Mammary epithelial cell (primary cell): ENCODE measurements at regions of chr6 and their contacts with region 1.

Region 1: GRCh38 chr6:113626475-113626874 is 230.7 kb upstream of the MARCKS start:
- DNase-seq: no peak
- H3K4me3 ChIP-seq: no peak overlapping the region
- H3K27ac ChIP-seq: no peak overlapping the region
- H3K4me1 ChIP-seq: peaks cover 10% of the 10 kb centered on the region
- H3K27me3 ChIP-seq: no peaks in the 10 kb centered on the region
- CTCF ChIP-seq: no peak

Region 2: DNA sequence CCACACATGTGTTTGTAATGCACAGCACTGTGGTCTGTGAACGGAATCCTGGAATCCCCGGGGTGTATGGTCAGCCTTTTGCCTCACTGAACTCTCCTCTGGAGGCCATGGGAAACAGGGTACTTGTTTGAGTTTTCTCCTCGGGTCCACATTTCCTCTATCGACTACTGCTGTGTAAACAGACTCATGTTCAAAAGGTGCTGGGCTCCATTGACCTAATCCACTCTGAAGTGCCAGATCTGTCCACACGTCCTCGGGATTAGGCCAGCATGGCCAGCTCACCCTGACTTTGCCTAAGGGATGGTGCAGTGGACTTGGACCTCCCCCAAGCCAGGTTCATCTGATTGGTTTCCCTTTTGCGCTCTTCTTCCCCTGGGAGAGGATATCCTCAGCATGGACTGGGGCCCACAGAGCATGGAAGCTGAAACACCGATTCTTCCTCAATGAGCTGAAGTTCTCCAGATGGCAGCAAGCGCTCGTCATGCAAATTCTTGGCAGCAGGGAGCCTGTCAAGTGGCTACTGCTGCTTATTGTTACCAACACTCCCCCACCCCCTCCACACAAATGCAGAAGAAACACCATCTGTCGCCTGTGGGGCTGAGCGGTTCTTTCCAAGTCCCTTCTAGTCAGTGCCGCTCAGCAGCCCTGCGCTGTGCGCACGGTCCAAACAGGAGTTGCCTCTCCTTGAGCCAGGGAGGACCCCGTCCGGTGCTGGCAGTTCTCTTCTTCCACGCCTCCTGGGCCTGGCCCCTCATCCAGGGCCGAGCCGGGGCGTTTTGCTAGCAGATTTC is 61.9 kb before region 1 on chr6:
- CTCF ChIA-PET with region 1: no interaction called
- dilution Hi-C with region 1: no loop called
- in situ Hi-C with region 1: no loop called
- intact Hi-C with region 1: loop called (anchors 2 kb)
- DNase-seq: no peak
- H3K4me3 ChIP-seq: no peak overlapping the region
- H3K27ac ChIP-seq: no peak overlapping the region
- H3K4me1 ChIP-seq: peaks cover 21% of the 10 kb centered on the region
- H3K27me3 ChIP-seq: no peaks in the 10 kb centered on the region
- CTCF ChIP-seq: no peak

Region 3: GRCh38 chr6:113662688-113663333 is 36.3 kb after region 1 on chr6:
- CTCF ChIA-PET with region 1: no interaction called
- dilution Hi-C with region 1: loop called (anchors 5 kb)
- in situ Hi-C with region 1: no loop called
- intact Hi-C with region 1: no loop called
- DNase-seq: no peak
- H3K4me3 ChIP-seq: no peak overlapping the region
- H3K27ac ChIP-seq: no peak overlapping the region
- H3K4me1 ChIP-seq: no peaks in the 10 kb centered on the region
- H3K27me3 ChIP-seq: no peaks in the 10 kb centered on the region
- CTCF ChIP-seq: no peak